Activated naive CD8-positive, alpha-beta T cell treated with anti-CD3 and anti-CD28 coated beads, Interleukin-2, amount 10 ng/mL, durations not matched to agents 7 days and 5 days (primary cell): ENCODE measurements at regions of chr6 and their contacts with region 1.

Region 1: GRCh38 chr6:166956444-166957086 is at the start of gene RNASET2:
- DNase-seq: peak; percentile 100
- ATAC-seq: peak; percentile 79
- H3K4me3 Mint-ChIP-seq: peak within 1 kb of the TSS; percentile 92
- H3K27ac Mint-ChIP-seq: peak within 1 kb of the TSS; percentile 99
- H3K4me1 Mint-ChIP-seq: peaks cover 43% of the 10 kb centered on the region
- H3K27me3 Mint-ChIP-seq: no peaks in the 10 kb centered on the region
- total RNA-seq, gene RNASET2: 69.2 to 73.1 TPM

Region 2: GRCh38 chr6:166877906-166878305 is 78.7 kb before region 1 on chr6:
- POLR2A ChIA-PET with region 1: no interaction called
- DNase-seq: no peak
- ATAC-seq: no peak
- H3K4me3 Mint-ChIP-seq: no peak overlapping the region
- H3K27ac Mint-ChIP-seq: no peak overlapping the region
- H3K4me1 Mint-ChIP-seq: no peaks in the 10 kb centered on the region
- H3K27me3 Mint-ChIP-seq: peaks cover 15% of the 10 kb centered on the region

Region 3: DNA sequence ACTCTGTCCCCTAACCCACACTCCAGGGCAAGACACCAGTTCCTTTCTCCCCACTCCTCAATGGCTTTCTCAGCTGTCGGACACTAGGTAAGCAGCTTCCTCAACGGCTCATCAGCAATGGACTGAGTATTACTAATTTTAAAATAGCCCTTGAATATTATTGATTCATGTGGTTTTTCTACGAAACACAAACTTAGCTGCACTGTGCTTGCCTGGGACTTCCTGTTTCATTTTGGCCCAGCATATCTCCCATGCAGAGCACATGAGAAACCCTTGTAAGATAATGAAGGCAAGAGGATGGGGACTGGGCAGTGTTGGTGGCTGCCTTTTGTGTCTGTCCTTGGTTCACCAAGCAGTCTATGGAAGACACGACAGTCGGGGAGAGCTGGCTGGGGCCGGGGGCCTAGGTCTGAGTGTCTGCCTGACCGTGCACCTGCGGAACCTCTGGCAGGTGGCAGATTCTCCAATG is 49.2 kb before region 1 on chr6:
- POLR2A ChIA-PET with region 1: interaction called, 14 read pairs
- DNase-seq: no peak
- ATAC-seq: peak; percentile 92
- H3K4me3 Mint-ChIP-seq: peak overlapping the region; percentile 17
- H3K27ac Mint-ChIP-seq: peak overlapping the region; percentile 84
- H3K4me1 Mint-ChIP-seq: peaks cover 27% of the 10 kb centered on the region
- H3K27me3 Mint-ChIP-seq: no peaks in the 10 kb centered on the region

Region 4: DNA sequence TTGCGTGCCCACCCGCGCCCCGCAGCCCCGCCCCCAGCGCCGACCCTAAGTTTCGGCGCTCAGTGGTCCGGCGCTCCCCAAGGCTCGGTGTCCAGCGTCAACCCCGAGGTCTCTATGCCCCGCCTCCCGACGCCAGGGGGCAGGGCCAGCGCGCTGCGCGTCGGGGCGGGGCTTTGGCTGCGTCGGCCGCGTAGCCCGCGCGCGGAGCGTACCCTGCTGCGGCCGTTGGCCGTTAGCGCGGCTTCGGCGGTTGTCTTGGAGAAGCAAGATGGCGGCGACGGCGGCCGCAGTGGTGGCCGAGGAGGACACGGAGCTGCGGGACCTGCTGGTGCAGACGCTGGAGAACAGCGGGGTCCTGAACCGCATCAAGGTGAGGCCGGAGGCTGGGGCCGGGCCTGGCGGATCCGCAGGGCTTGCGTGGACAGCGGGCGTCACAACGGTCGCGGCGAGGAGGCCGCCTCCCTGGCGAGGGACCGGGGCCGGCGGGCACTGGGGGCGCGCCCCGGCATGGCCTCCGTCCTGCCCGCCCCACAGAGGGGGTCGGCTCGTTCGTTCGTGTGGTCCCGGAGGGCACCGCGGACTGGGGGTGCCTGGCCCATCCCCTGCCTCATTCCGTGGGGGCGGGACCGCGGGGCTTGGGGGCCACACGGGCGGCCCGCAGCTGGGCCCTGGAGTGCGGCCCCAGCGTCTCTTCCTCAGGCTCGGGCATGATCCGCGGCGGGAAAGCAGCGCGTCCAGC is 42.7 kb after region 1 on chr6 and contains the start of gene CEP43:
- POLR2A ChIA-PET with region 1: interaction called, 22 read pairs
- DNase-seq: peak; percentile 96
- ATAC-seq: peak; percentile 95
- H3K4me3 Mint-ChIP-seq: peak within 1 kb of the TSS; percentile 91
- H3K27ac Mint-ChIP-seq: peak within 1 kb of the TSS; percentile 83
- H3K4me1 Mint-ChIP-seq: peaks cover 19% of the 10 kb centered on the region
- H3K27me3 Mint-ChIP-seq: no peaks in the 10 kb centered on the region
- total RNA-seq, gene CEP43: 23.3 to 26.3 TPM